ENCODE measurements at regions of chr10 and their contacts with region 1.

Region 1: DNA sequence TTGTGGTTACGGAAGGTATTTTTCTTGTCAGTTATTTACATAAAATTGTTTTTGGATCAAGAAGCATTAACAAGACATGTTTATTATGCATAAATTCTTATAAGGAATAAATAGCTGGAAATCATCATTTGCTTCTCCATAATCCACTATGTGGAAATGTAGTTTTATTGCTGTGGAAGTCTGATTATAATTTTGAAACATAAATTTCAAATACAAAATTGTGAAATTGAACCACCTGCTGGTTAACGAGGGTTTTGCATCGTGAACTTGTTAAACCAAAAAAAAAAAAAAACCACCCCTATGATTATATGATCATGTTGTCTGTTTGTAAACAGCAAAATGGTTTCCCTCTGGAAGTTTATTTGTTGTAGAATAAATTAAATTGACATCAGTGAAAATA is 25.9 kb downstream of the ABRAXAS2 start:
- DNase-seq: peak in 5 of 35 experiments; percentile 5 to 49 (median 7)
- ATAC-seq: no peak
- H3K4me3 ChIP-seq: no peak overlapping the region
- H3K4me3 Mint-ChIP-seq: no peak overlapping the region
- H3K27ac ChIP-seq: no peak overlapping the region
- H3K27ac Mint-ChIP-seq: no peak overlapping the region
- H3K4me1 ChIP-seq: no peaks in the 10 kb centered on the region
- H3K4me1 Mint-ChIP-seq: no peaks in the 10 kb centered on the region
- H3K27me3 ChIP-seq: no peaks in the 10 kb centered on the region
- H3K27me3 Mint-ChIP-seq: no peaks in the 10 kb centered on the region

Region 2: GRCh38 chr10:124418726-124419501 is 408.6 kb before region 1 on chr10 and contains the start of gene OAT:
- CTCF ChIA-PET with region 1: no interaction called
- POLR2A ChIA-PET with region 1: interaction called in 1 of 2 experiments, 10 read pairs
- DNase-seq: peak; percentile 90 to 98 (median 96)
- ATAC-seq: peak; percentile 95 to 98 (median 96)
- H3K4me3 ChIP-seq: peak within 1 kb of the TSS; percentile 55 to 66
- H3K4me3 Mint-ChIP-seq: peak within 1 kb of the TSS; percentile 76 to 82 (median 77)
- H3K27ac ChIP-seq: peak within 1 kb of the TSS; percentile 15
- H3K27ac Mint-ChIP-seq: peak within 1 kb of the TSS; percentile 43 to 73
- H3K4me1 ChIP-seq: peaks cover 5 to 14% of the 10 kb centered on the region in 2 experiments
- H3K4me1 Mint-ChIP-seq: peaks cover 30 to 36% (median 30%) of the 10 kb centered on the region in 3 donors
- H3K27me3 ChIP-seq: peaks cover 0 to 17% of the 10 kb centered on the region in 2 experiments
- H3K27me3 Mint-ChIP-seq: peaks cover 3 to 7% of the 10 kb centered on the region in 2 donors
- total RNA-seq, gene OAT: 23.2 to 42.5 (median 38.1) TPM